PC-9 (cell line): ENCODE measurements at regions of chr12 and their contacts with region 1.

Region 1: DNA sequence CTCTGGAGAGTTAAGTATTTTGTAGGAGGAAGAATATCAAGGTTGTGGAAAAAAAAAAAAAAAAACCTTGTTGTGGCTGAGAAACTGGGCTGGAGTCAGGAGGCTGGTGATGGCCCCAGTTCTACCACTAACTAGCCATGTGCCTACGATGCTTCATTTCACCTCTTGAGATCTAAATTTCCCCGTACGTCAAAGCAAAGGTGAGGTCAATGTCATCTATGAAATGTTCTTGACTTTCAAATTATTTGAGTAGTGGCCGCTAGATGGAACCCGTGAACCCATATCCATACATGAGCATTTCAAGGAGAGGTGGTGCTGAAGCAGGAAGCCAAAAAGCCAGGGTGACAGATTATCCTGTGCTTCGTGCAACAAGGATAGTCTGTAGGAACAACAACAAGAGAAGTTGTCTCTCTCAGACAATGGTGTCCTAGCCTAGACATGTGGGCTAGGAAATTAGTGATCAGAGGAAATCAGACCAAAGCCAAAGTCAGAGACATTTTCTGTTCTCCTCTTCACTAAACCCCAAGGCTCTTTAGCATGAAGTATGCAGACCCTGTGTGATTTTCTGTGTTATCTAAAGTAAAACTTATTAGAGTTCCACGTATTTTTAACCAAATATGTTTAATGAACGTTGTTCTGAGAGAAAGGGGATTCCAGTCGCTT is 95.5 kb upstream of the ETV6 start:
- DNase-seq: peak; percentile 54 to 61
- H3K4me3 ChIP-seq: no peak overlapping the region
- H3K27ac ChIP-seq: no peak overlapping the region
- H3K4me1 ChIP-seq: peaks cover 21% of the 10 kb centered on the region; the same call in 1 of the 2 replicates
- H3K27me3 ChIP-seq: no peaks in the 10 kb centered on the region
- CTCF ChIP-seq: peak; percentile 79

Region 2: GRCh38 chr12:11513288-11513687 is 40.7 kb before region 1 on chr12:
- CTCF ChIA-PET with region 1: interaction called, 11 read pairs
- POLR2A ChIA-PET with region 1: no interaction called
- intact Hi-C with region 1: no loop called
- DNase-seq: no peak
- H3K4me3 ChIP-seq: no peak overlapping the region
- H3K27ac ChIP-seq: no peak overlapping the region
- H3K4me1 ChIP-seq: peaks cover 38% of the 10 kb centered on the region
- H3K27me3 ChIP-seq: no peaks in the 10 kb centered on the region
- CTCF ChIP-seq: no peak

Region 3: DNA sequence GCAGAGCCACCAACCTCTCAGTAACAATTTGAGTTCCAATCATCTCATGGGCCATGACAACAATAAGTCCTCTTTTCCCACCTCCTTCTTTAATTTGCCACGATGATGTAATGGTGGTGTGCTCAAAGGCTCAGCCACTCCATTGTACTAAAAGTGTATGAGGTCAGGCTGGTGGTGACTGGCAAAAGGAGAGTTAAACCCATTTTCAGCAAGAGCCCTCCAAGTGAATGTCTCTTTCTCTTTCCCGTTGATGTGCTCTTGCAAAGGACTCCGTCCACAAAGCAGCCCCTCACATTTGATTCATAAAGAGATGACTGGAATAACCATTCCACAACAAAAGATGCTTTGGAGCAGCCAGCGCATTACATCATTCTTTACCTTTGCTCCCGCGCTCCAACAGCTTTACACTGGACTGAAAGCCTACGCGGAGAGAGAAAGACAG is 967.1 kb after region 1 on chr12:
- CTCF ChIA-PET with region 1: no interaction called
- POLR2A ChIA-PET with region 1: no interaction called
- intact Hi-C with region 1: no loop called
- DNase-seq: no peak
- H3K4me3 ChIP-seq: no peak overlapping the region
- H3K27ac ChIP-seq: no peak overlapping the region
- H3K4me1 ChIP-seq: no peaks in the 10 kb centered on the region; the same call in 1 of the 2 replicates
- H3K27me3 ChIP-seq: no peaks in the 10 kb centered on the region
- CTCF ChIP-seq: no peak